ENCODE measurements at regions of chr16 and their contacts with region 1.

Region 1: GRCh38 chr16:62475573-62475972 is 439.3 kb upstream of the CDH8 start:
- DNase-seq: no peak
- ATAC-seq: no peak
- H3K4me3 ChIP-seq: no peak overlapping the region
- H3K4me3 Mint-ChIP-seq: no peak overlapping the region
- H3K27ac ChIP-seq: no peak overlapping the region
- H3K27ac Mint-ChIP-seq: no peak overlapping the region
- H3K4me1 ChIP-seq: no peaks in the 10 kb centered on the region
- H3K4me1 Mint-ChIP-seq: no peaks in the 10 kb centered on the region
- H3K27me3 ChIP-seq: no peaks in the 10 kb centered on the region
- H3K27me3 Mint-ChIP-seq: no peaks in the 10 kb centered on the region
- CTCF ChIP-seq: no peak

Region 2: GRCh38 chr16:62424206-62424605 is 51.4 kb before region 1 on chr16:
- CTCF ChIA-PET with region 1: no interaction called
- POLR2A ChIA-PET with region 1: no interaction called
- intact Hi-C with region 1: no loop called
- DNase-seq: no peak
- ATAC-seq: no peak
- H3K4me3 ChIP-seq: no peak overlapping the region
- H3K4me3 Mint-ChIP-seq: no peak overlapping the region
- H3K27ac ChIP-seq: no peak overlapping the region
- H3K27ac Mint-ChIP-seq: no peak overlapping the region
- H3K4me1 ChIP-seq: no peaks in the 10 kb centered on the region
- H3K4me1 Mint-ChIP-seq: no peaks in the 10 kb centered on the region
- H3K27me3 ChIP-seq: no peaks in the 10 kb centered on the region
- H3K27me3 Mint-ChIP-seq: no peaks in the 10 kb centered on the region
- CTCF ChIP-seq: no peak

Region 3: DNA sequence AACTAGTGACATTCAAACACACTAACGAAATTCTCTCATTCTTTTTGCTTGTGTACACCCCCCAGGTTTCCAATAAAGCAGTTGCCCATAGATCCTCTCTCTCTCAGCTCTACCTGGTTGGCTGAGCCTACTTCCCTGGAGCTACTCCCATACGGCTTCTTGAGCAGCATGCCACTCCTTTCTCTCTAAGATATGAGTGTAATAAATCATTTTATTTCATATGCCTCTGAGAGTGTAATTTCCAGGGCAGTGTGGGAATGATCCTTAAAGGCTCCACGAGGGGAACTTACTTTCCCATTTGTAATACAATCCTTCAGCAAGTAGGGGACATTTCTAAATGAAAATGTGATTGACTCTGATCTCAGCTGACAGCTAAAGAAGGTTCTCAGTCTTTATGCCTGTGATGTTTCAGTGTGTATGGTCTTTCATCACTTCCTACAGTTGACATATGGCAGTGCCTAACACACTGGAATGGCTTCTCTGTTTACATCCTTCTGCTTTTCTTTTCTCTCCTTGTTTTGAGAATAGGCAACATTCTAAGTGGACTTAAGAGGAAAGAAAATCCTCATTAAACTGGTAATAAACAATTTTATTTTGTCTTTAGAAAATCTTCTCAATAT is 755.0 kb after region 1 on chr16:
- CTCF ChIA-PET with region 1: no interaction called
- POLR2A ChIA-PET with region 1: no interaction called
- intact Hi-C with region 1: no loop called
- DNase-seq: no peak
- ATAC-seq: no peak
- H3K4me3 ChIP-seq: no peak overlapping the region
- H3K4me3 Mint-ChIP-seq: no peak overlapping the region
- H3K27ac ChIP-seq: no peak overlapping the region
- H3K27ac Mint-ChIP-seq: no peak overlapping the region
- H3K4me1 ChIP-seq: no peaks in the 10 kb centered on the region
- H3K4me1 Mint-ChIP-seq: no peaks in the 10 kb centered on the region
- H3K27me3 ChIP-seq: no peaks in the 10 kb centered on the region
- H3K27me3 Mint-ChIP-seq: no peaks in the 10 kb centered on the region
- CTCF ChIP-seq: no peak

Region 4: GRCh38 chr16:63365649-63366304 is 890.2 kb after region 1 on chr16:
- CTCF ChIA-PET with region 1: no interaction called
- POLR2A ChIA-PET with region 1: no interaction called
- intact Hi-C with region 1: loop called in 1 of 2 experiments (anchors 5 kb)
- DNase-seq: no peak
- ATAC-seq: no peak
- H3K4me3 ChIP-seq: no peak overlapping the region
- H3K4me3 Mint-ChIP-seq: no peak overlapping the region
- H3K27ac ChIP-seq: no peak overlapping the region
- H3K27ac Mint-ChIP-seq: no peak overlapping the region
- H3K4me1 ChIP-seq: no peaks in the 10 kb centered on the region
- H3K4me1 Mint-ChIP-seq: no peaks in the 10 kb centered on the region
- H3K27me3 ChIP-seq: no peaks in the 10 kb centered on the region
- H3K27me3 Mint-ChIP-seq: no peaks in the 10 kb centered on the region
- CTCF ChIP-seq: no peak